ENCODE measurements at regions of chr12 and their contacts with region 1.

Region 1: GRCh38 chr12:89345830-89346740 is 6.2 kb downstream of the DUSP6 start:
- DNase-seq: peak; percentile 28 to 60
- ATAC-seq: peak; percentile 48 to 67 (median 61)
- H3K4me3 ChIP-seq: peak overlapping the region; percentile 77
- H3K27ac ChIP-seq: peak overlapping the region; percentile 42
- H3K4me1 ChIP-seq: peaks cover under 1% of the 10 kb centered on the region
- H3K27me3 ChIP-seq: peaks cover 0 to 43% (median 12%) of the 10 kb centered on the region in 3 donors
- CTCF ChIP-seq: no peak

Region 2: GRCh38 chr12:88519802-88520435 is 826.2 kb before region 1 on chr12:
- intact Hi-C with region 1: no loop called
- DNase-seq: no peak
- ATAC-seq: no peak
- H3K4me3 ChIP-seq: no peak overlapping the region
- H3K27ac ChIP-seq: no peak overlapping the region
- H3K4me1 ChIP-seq: peaks cover 9% of the 10 kb centered on the region
- H3K27me3 ChIP-seq: no peaks in the 10 kb centered on the region
- CTCF ChIP-seq: no peak

Region 3: GRCh38 chr12:89162704-89163261 is 183.3 kb before region 1 on chr12:
- intact Hi-C with region 1: loop called in 1 of 2 experiments (anchors 10 kb)
- DNase-seq: peak; percentile 57 to 64
- ATAC-seq: peak; percentile 69 to 90 (median 88)
- H3K4me3 ChIP-seq: no peak overlapping the region
- H3K27ac ChIP-seq: peak overlapping the region; percentile 69
- H3K4me1 ChIP-seq: peaks cover 7% of the 10 kb centered on the region
- H3K27me3 ChIP-seq: no peaks in the 10 kb centered on the region
- CTCF ChIP-seq: no peak

Region 4: DNA sequence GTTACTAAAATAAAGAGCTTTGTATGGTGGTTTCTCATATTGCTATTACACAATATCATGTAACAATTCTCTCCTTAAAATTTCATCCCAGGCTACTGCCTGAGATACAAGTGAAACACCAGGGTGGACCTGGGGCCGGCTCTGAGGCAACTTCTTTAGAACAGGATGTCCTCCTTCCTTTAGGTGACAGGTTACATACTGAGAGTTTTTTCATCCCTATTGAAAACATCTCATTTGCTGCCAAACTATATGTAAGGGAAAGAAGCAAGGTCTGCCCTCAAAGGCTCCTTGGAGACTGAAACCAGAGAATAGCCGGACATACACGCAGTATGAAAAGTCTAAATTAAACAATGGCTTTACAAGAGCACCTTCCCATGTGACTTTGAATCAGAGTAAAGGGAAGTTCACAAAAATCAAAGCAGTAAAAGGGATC is 133.7 kb before region 1 on chr12:
- intact Hi-C with region 1: loop called in 1 of 2 experiments (anchors 2 kb)
- DNase-seq: peak; percentile 20 to 46
- ATAC-seq: peak; percentile 28 to 76 (median 56)
- H3K4me3 ChIP-seq: no peak overlapping the region
- H3K27ac ChIP-seq: peak overlapping the region; percentile 41
- H3K4me1 ChIP-seq: peaks cover 14% of the 10 kb centered on the region
- H3K27me3 ChIP-seq: no peaks in the 10 kb centered on the region
- CTCF ChIP-seq: no peak

Region 5: GRCh38 chr12:89259821-89260220 is 86.3 kb before region 1 on chr12:
- intact Hi-C with region 1: loop called in 1 of 2 experiments (anchors 5 kb)
- DNase-seq: no peak
- ATAC-seq: no peak
- H3K4me3 ChIP-seq: no peak overlapping the region
- H3K27ac ChIP-seq: no peak overlapping the region
- H3K4me1 ChIP-seq: no peaks in the 10 kb centered on the region
- H3K27me3 ChIP-seq: no peaks in the 10 kb centered on the region
- CTCF ChIP-seq: no peak

Region 6: GRCh38 chr12:89306827-89307473 is 39.1 kb before region 1 on chr12:
- intact Hi-C with region 1: no loop called
- DNase-seq: no peak
- ATAC-seq: no peak
- H3K4me3 ChIP-seq: no peak overlapping the region
- H3K27ac ChIP-seq: no peak overlapping the region
- H3K4me1 ChIP-seq: no peaks in the 10 kb centered on the region
- H3K27me3 ChIP-seq: no peaks in the 10 kb centered on the region
- CTCF ChIP-seq: no peak